AG04450 (cell line): ENCODE measurements at regions of chr17 and their contacts with region 1.

Region 1: GRCh38 chr17:76397687-76398487 is 13.5 kb downstream of the SPHK1 start:
- DNase-seq: peak; percentile 77
- H3K4me3 ChIP-seq: no peak overlapping the region
- H3K27ac ChIP-seq: no peak overlapping the region
- H3K27me3 ChIP-seq: no peaks in the 10 kb centered on the region
- CTCF ChIP-seq: peak; percentile 97

Region 2: DNA sequence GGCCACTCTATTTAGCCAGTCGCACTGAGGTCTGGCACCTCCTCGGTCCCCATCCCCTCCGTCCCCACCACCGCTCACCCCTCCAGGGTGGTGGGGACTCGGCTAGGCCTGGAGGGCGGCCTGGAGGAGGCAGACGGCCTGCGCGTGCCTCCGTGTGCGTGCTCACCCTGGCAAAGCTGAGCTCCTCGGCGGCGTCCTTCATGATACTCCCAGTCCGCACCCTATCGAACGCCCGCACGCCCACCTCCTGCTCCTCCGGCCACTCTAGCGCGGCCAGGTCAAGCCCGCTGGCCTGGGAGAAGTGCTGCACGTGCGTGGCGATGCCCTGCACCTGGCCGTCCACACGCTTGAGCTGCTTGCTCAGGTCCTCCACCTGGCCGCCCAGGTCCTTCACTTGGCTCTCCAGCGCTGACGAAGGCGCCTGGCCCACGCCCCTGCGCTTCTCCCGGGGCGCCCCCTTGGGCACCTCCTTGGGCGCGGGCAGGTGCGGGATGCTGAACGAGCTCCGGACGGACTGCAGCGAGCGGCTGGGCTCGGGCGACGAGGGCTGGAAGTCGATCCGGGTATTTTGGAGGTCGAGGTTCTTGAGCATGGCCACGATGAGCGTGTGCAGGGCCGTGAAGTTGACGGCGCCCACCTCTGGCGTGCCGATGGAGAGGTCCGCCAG is 90.5 kb before region 1 on chr17:
- CTCF ChIA-PET with region 1: interaction called, 170 read pairs
- POLR2A ChIA-PET with region 1: interaction called, 3 read pairs
- DNase-seq: no peak
- H3K4me3 ChIP-seq: no peak overlapping the region
- H3K27ac ChIP-seq: no peak overlapping the region
- H3K27me3 ChIP-seq: no peaks in the 10 kb centered on the region
- CTCF ChIP-seq: no peak

Region 3: DNA sequence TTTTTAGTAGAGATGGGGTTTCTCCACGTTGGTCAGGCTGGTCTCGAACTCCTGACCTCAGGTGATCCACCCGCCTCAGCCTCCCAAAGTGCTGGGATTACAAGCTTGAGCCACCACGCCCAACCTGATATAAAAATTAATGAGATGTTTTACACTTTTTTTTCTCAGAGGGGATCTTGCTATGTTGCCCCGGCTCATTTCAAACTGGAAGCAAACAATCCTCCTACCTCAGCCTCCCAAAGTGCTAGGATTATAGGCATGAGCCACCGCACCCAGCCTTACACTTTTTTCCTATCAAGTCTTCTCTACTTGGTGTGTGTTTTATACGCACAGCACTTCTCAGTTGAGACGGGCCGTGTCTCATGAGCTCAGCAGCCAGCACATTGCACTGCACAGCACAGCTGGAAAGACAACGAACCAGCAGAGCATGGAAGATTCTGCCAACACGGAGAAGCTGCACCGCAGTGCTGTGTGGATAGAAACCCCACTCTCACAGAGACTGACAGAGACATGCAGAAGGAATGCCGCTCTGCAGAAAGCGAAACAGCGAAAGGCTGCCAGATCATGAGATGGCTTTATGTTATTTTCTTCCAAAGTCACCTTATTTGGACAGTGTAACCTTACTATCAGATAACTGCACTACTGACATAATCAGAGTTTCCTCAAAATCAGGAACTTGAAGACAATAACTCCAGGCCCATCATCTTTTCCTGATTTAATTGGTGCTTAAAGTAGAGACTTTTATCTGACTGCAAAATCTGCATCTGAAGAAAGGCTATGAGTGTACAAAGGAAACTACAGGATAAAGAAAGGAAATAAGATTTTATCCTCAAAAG is 83.3 kb before region 1 on chr17:
- CTCF ChIA-PET with region 1: interaction called, 11 read pairs
- POLR2A ChIA-PET with region 1: no interaction called
- DNase-seq: peak; percentile 62
- H3K4me3 ChIP-seq: peak overlapping the region; percentile 29
- H3K27ac ChIP-seq: peak overlapping the region; percentile 53
- H3K27me3 ChIP-seq: no peaks in the 10 kb centered on the region
- CTCF ChIP-seq: no peak

Region 4: GRCh38 chr17:76384222-76384986 is 13.5 kb before region 1 on chr17 and contains the start of gene SPHK1:
- CTCF ChIA-PET with region 1: interaction called, 43 read pairs
- POLR2A ChIA-PET with region 1: interaction called, 4 read pairs
- DNase-seq: no peak
- H3K4me3 ChIP-seq: peak within 1 kb of the TSS; percentile 74
- H3K27ac ChIP-seq: peak within 1 kb of the TSS; percentile 87
- H3K27me3 ChIP-seq: no peaks in the 10 kb centered on the region
- CTCF ChIP-seq: no peak
- polyA plus RNA-seq, gene SPHK1: 11.6 and 16.2 TPM in 2 replicates

Region 5: GRCh38 chr17:76408052-76408849 is 10.4 kb after region 1 on chr17:
- CTCF ChIA-PET with region 1: interaction called, 43 read pairs
- POLR2A ChIA-PET with region 1: no interaction called
- DNase-seq: no peak
- H3K4me3 ChIP-seq: no peak overlapping the region
- H3K27ac ChIP-seq: no peak overlapping the region
- H3K27me3 ChIP-seq: no peaks in the 10 kb centered on the region
- CTCF ChIP-seq: peak; percentile 82

Region 6: GRCh38 chr17:76414334-76415295 is 16.7 kb after region 1 on chr17:
- CTCF ChIA-PET with region 1: interaction called, 43 read pairs
- POLR2A ChIA-PET with region 1: interaction called, 4 read pairs
- DNase-seq: no peak
- H3K4me3 ChIP-seq: no peak overlapping the region
- H3K27ac ChIP-seq: no peak overlapping the region
- H3K27me3 ChIP-seq: no peaks in the 10 kb centered on the region
- CTCF ChIP-seq: no peak

Region 7: DNA sequence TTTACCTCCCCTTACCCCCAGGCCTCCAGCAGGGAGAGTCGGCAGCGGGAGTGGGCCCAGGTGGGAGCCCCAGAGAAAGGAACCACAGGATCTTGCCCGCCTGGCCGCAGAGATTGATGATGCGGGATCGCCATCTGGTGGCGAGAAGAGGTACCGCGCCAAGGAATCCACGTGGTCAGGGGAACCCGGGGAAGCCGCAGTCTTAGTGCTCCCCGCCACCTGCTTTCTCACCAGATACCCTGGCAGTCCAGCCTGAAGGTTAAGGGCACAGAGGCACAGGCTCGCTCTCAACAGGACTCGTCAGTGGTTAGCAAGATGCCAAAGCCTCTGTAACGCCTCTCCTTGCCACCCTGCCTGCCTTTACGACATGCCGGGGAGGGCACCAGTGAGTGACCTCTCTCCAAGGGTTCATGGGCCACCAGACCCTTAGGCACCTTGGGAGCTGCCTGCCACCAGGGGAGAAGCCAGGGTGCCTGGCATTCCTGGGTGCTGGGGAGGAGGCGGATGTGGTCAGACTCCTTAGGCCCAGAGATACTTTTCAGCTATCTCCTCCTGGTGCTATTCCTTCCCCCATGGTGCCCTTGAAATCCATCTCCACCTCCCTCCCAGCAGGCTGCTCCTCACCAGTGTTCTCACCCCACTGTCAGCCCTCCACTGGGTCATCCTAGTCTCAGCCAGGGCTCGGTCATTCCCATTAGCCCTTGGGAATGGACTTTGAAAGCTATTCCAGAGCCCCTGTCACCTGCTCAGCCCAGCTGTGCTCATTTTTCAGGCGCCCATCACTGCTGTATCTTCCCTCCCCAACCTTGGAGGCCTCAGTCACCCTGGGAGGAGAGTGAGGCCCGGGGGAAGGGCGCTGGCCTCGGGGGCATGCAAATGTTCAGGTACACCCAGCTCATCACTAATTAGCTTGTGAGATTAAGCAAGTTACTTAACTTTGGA is 108.8 kb after region 1 on chr17:
- CTCF ChIA-PET with region 1: interaction called, 14 read pairs
- POLR2A ChIA-PET with region 1: no interaction called
- DNase-seq: no peak
- H3K4me3 ChIP-seq: no peak overlapping the region
- H3K27ac ChIP-seq: no peak overlapping the region
- H3K27me3 ChIP-seq: peaks cover 5% of the 10 kb centered on the region
- CTCF ChIP-seq: peak; percentile 87